Psoas muscle (tissue), 8 donors: ENCODE measurements at regions of chr11 and their contacts with region 1.

Region 1: DNA sequence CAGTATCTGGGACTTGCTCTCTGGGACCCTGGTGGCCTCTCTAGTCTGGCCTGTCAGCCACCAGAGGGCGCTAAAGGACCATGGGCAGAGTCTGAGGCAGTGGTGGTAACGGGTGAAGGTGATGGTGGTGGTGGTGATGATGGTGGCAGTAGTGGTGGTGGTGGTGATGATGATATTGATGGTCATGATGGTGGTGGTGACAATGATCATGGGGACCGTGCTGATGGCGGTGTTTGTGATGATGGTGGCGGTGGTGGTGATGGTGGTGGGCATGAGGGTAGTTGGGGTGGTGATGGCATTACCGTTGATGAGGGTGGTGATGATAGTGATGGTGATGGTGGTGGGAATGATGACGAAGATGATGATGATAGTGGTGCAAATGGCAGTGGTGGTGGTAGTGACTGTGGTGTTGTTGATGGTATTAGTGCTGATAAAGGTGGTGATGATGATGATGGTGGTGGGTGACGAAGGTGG is 16.0 kb downstream of the TRPM5 start:
- DNase-seq: peak; percentile 66 to 83
- ATAC-seq: peak; percentile 69 to 77 (median 72)
- H3K4me3 ChIP-seq: no peak overlapping the region
- H3K27ac ChIP-seq: no peak overlapping the region
- H3K4me1 ChIP-seq: no peaks in the 10 kb centered on the region
- H3K27me3 ChIP-seq: peaks cover 0 to 2% (median 0%) of the 10 kb centered on the region in 3 donors
- CTCF ChIP-seq: peak; percentile 65

Region 2: DNA sequence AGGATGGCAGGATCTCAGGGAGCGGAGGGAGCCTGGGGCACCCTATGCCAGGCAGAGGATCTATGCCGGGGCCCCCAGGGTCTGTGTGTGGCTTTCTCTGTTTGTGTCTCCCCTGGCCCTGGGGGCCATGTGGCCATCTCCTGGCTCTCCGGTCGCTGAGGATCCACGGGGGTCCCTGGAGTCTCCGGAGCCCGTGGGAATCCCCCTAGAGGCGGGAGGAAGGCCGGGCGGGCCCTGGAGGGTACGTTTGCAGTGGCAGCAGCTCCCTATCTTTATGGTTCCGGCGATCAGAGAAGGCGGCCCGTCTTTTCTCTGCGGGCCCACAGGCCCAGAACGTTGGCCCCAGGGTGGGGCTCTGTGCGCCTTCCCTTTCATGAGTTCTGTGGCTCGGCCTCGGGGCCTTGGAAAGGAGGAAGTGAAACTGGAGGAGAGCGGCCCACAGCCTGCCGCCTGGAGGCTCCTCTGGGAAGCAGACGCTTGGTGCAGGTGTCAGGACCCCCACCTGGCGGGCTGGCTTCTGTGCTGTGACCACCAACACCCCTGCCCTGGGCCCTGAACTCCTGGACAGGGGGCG is 98.5 kb after region 1 on chr11:
- intact Hi-C with region 1: loop called (anchors 1 to 2 kb)
- DNase-seq: peak; percentile 47 to 68
- ATAC-seq: no peak
- H3K4me3 ChIP-seq: no peak overlapping the region
- H3K27ac ChIP-seq: no peak overlapping the region
- H3K4me1 ChIP-seq: no peaks in the 10 kb centered on the region
- H3K27me3 ChIP-seq: peaks cover 0 to 18% (median 3%) of the 10 kb centered on the region in 3 donors
- CTCF ChIP-seq: no peak

Region 3: GRCh38 chr11:2532704-2533586 is 104.6 kb after region 1 on chr11:
- intact Hi-C with region 1: loop called (anchors 1 to 2 kb)
- DNase-seq: peak; percentile 88 to 95
- ATAC-seq: peak; percentile 85 to 94 (median 89)
- H3K4me3 ChIP-seq: peak overlapping the region; percentile 53
- H3K27ac ChIP-seq: no peak overlapping the region
- H3K4me1 ChIP-seq: peaks cover 8% of the 10 kb centered on the region
- H3K27me3 ChIP-seq: peaks cover 0 to 2% (median 0%) of the 10 kb centered on the region in 3 donors
- CTCF ChIP-seq: peak; percentile 99